ENCODE measurements at regions of chr7 and their contacts with region 1.

Region 1: DNA sequence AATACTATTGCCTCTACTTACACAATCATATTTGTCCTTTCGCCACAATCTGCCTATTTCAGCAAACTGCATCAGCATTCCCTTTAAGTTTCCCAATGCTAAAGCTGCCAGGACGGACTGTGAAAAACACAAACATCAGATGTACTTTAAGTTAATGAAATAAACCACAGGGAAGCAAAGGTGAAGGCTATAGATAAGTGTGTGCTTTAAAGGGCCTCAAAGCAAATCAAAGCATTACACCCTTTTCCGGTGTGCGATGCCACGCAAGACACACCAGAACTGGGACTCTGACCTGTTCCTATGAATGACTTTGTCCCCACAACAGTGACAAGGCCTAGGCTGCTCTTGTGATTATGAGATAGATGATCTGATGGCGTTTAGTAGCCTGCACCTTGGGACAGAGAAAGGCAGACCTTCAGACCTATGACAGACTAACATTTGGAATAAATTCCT is 23.4 kb downstream of the SLC26A3 start:
- DNase-seq: no peak
- H3K4me3 ChIP-seq: no peak overlapping the region
- H3K27ac ChIP-seq: peak overlapping the region in 1 of 2 donors; percentile 70
- H3K4me1 ChIP-seq: peaks cover under 1% of the 10 kb centered on the region
- H3K27me3 ChIP-seq: no peaks in the 10 kb centered on the region
- CTCF ChIP-seq: no peak
- POLR2A ChIP-seq: no peak

Region 2: GRCh38 chr7:107743567-107744344 is 35.9 kb before region 1 on chr7 and contains the start of gene CBLL1:
- intact Hi-C with region 1: loop called (anchors 5 kb)
- DNase-seq: peak; percentile 96
- H3K4me3 ChIP-seq: peak within 1 kb of the TSS; percentile 71 to 73
- H3K27ac ChIP-seq: peak within 1 kb of the TSS; percentile 89 to 95
- H3K4me1 ChIP-seq: no peaks in the 10 kb centered on the region
- H3K27me3 ChIP-seq: no peaks in the 10 kb centered on the region
- CTCF ChIP-seq: peak; percentile 38 to 87 (median 76)
- POLR2A ChIP-seq: peak; percentile 24
- total RNA-seq, gene CBLL1: 35.3 to 49.2 TPM

Region 3: DNA sequence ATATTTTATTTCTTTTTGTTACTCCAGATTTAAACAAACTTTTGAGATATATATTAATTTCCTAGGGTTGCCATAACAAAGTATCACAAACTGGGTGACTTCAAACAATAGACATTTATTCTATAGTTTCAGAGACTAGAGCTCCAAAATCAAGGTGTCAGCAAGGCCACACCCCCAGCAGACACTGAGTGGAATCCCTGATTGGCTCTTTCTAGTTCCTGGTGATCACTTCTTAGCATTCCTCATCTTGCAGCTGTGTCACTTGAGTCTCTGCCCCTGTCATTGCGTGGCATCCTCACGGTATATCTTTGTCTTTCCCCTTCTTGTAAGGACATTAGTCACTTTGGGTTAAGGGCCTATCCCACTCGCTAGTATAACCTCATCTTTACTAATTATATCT is 31.0 kb after region 1 on chr7:
- intact Hi-C with region 1: loop called (anchors 5 kb)
- DNase-seq: no peak
- H3K4me3 ChIP-seq: no peak overlapping the region
- H3K27ac ChIP-seq: peak overlapping the region in 1 of 2 donors; percentile 83
- H3K4me1 ChIP-seq: peaks cover 6% of the 10 kb centered on the region
- H3K27me3 ChIP-seq: no peaks in the 10 kb centered on the region
- CTCF ChIP-seq: no peak
- POLR2A ChIP-seq: no peak

Measured in prostate gland (tissue), 2 donors.